AG04449 (cell line): ENCODE measurements at regions of chr5 and their contacts with region 1.

Region 1: DNA sequence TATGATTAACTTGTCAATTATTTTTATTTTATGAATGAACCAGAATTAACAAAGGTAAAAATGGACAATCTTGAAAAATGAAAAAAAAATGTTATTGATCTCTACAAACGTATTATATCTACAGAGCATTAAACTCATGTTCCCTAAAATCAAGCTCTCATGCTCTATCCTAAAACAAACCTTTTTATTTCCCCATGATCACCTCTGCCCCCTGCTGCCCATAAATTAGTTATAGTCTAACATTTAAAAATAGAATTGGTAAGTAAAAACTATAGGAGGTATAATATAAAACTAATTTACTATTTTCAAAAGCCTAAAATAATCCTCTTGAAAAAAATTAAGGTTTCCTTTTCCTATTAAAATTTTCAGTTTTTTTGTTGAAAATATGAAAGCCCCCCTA is 168.0 kb upstream of the POU5F2 start:
- DNase-seq: no peak
- H3K4me3 ChIP-seq: no peak overlapping the region
- CTCF ChIP-seq: no peak

Region 2: GRCh38 chr5:93677344-93678021 is 231.9 kb before region 1 on chr5:
- CTCF ChIA-PET with region 1: no interaction called
- POLR2A ChIA-PET with region 1: no interaction called
- DNase-seq: peak; percentile 79
- H3K4me3 ChIP-seq: no peak overlapping the region
- CTCF ChIP-seq: no peak

Region 3: GRCh38 chr5:93899026-93899600 is 10.2 kb before region 1 on chr5:
- CTCF ChIA-PET with region 1: interaction called, 13 read pairs
- POLR2A ChIA-PET with region 1: no interaction called
- DNase-seq: no peak
- H3K4me3 ChIP-seq: no peak overlapping the region
- CTCF ChIP-seq: peak; percentile 14